Calu3 (cell line): ENCODE measurements at regions of chr2 and their contacts with region 1.

Region 1: GRCh38 chr2:38968021-38968420 is 78.3 kb downstream of the ARHGEF33 start:
- DNase-seq: no peak
- H3K4me3 Mint-ChIP-seq: no peak overlapping the region
- H3K27ac Mint-ChIP-seq: no peak overlapping the region
- H3K4me1 Mint-ChIP-seq: no peaks in the 10 kb centered on the region
- H3K27me3 Mint-ChIP-seq: no peaks in the 10 kb centered on the region
- CTCF ChIP-seq: no peak

Region 2: GRCh38 chr2:38900726-38901125 is 67.3 kb before region 1 on chr2:
- CTCF ChIA-PET with region 1: interaction called, 14 read pairs
- intact Hi-C with region 1: no loop called
- DNase-seq: no peak
- H3K4me3 Mint-ChIP-seq: no peak overlapping the region
- H3K27ac Mint-ChIP-seq: no peak overlapping the region
- H3K4me1 Mint-ChIP-seq: no peaks in the 10 kb centered on the region
- H3K27me3 Mint-ChIP-seq: no peaks in the 10 kb centered on the region
- CTCF ChIP-seq: no peak

Region 3: DNA sequence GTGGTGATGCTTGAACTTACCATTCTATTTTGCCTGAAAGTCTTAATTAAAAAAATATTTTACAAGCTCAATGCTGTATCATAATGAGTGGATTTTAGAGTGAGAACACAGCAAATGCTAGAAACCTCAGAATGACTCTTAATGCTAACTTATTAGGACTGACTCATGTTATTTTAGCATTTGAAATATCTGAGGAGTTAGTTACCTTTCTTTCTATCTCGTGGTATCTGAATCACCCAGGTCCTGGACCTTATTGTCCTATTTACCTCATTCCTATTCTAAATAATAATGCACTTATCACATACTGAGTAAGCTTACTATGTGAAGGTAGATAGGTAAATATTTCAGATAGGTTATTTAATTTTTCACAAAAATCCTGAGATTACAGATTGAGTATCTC is 82.1 kb after region 1 on chr2:
- CTCF ChIA-PET with region 1: no interaction called
- intact Hi-C with region 1: no loop called
- DNase-seq: no peak
- H3K4me3 Mint-ChIP-seq: no peak overlapping the region
- H3K27ac Mint-ChIP-seq: no peak overlapping the region
- H3K4me1 Mint-ChIP-seq: no peaks in the 10 kb centered on the region
- H3K27me3 Mint-ChIP-seq: no peaks in the 10 kb centered on the region
- CTCF ChIP-seq: no peak

Region 4: GRCh38 chr2:39234754-39235153 is 266.7 kb after region 1 on chr2:
- CTCF ChIA-PET with region 1: no interaction called
- intact Hi-C with region 1: no loop called
- DNase-seq: peak; percentile 13
- H3K4me3 Mint-ChIP-seq: no peak overlapping the region
- H3K27ac Mint-ChIP-seq: no peak overlapping the region
- H3K4me1 Mint-ChIP-seq: no peaks in the 10 kb centered on the region
- H3K27me3 Mint-ChIP-seq: no peaks in the 10 kb centered on the region
- CTCF ChIP-seq: no peak